Right cardiac atrium (tissue), 5 donors: ENCODE measurements at regions of chr13 and their contacts with region 1.

Region 1: GRCh38 chr13:48214519-48215121 is 18.4 kb upstream of the ITM2B start:
- DNase-seq: no peak
- ATAC-seq: no peak
- H3K4me3 ChIP-seq: no peak overlapping the region
- H3K27ac ChIP-seq: no peak overlapping the region
- H3K4me1 ChIP-seq: no peaks in the 10 kb centered on the region
- H3K27me3 ChIP-seq: no peaks in the 10 kb centered on the region

Region 2: GRCh38 chr13:48009298-48009697 is 205.3 kb before region 1 on chr13:
- intact Hi-C with region 1: no loop called
- DNase-seq: no peak
- ATAC-seq: peak in 1 of 2 donors; percentile 29
- H3K4me3 ChIP-seq: no peak overlapping the region
- H3K27ac ChIP-seq: no peak overlapping the region
- H3K4me1 ChIP-seq: no peaks in the 10 kb centered on the region
- H3K27me3 ChIP-seq: no peaks in the 10 kb centered on the region

Region 3: DNA sequence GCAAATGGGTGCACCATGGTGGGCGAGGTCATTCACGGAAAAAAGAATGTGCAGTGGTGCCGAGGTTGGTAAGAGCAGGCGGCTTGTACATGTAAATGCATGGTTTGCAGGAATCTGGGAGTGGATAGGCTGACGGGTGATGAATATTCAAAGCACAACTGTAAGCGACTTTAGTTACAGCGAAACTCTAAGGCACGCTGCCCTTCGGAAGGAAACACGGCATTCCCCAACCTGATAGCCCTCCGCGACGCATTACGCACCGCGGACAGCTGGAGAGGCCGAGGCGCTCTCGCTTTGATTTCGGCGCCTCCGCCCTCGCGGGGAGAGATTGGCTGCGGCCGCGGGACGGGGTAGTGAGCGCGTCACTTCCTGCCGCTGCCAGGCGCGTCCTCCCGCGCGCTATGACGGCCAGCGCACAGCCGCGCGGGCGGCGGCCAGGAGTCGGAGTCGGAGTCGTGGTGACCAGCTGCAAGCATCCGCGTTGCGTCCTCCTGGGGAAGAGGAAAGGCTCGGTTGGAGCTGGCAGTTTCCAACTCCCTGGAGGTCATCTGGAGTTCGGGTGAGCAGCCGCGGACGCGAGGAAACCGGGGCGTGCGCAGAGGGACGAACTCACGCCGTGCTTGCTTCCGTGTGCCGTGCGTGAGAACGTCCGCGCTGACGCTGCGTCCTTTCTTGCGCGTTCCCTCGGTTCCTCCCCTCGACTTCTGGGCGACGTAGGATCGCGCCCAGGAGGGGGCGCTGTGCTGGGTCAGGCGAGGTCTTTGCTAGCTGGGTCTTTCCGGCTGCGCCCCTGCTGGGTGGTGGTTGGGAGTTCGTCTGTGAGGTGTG is 177.1 kb before region 1 on chr13 and contains the start of gene NUDT15:
- intact Hi-C with region 1: no loop called
- DNase-seq: peak; percentile 96 to 98 (median 98)
- ATAC-seq: peak; percentile 99
- H3K4me3 ChIP-seq: peak within 1 kb of the TSS; percentile 57
- H3K27ac ChIP-seq: peak within 1 kb of the TSS; percentile 95
- H3K4me1 ChIP-seq: no peaks in the 10 kb centered on the region
- H3K27me3 ChIP-seq: no peaks in the 10 kb centered on the region
- total RNA-seq, gene NUDT15: 8.0 to 10.6 (median 9.1) TPM

Region 4: GRCh38 chr13:48175185-48175584 is 39.4 kb before region 1 on chr13:
- intact Hi-C with region 1: loop called in 1 of 4 experiments (anchors 5 kb)
- DNase-seq: no peak
- ATAC-seq: no peak
- H3K4me3 ChIP-seq: no peak overlapping the region
- H3K27ac ChIP-seq: no peak overlapping the region
- H3K4me1 ChIP-seq: no peaks in the 10 kb centered on the region
- H3K27me3 ChIP-seq: no peaks in the 10 kb centered on the region